B cell (primary cell): ENCODE measurements at regions of chr3 and their contacts with region 1.

Region 1: GRCh38 chr3:177197041-177197727 is at the start of gene TBL1XR1:
- DNase-seq: peak; percentile 93
- ATAC-seq: peak; percentile 60
- H3K4me3 ChIP-seq: peak within 1 kb of the TSS; percentile 94 to 99 (median 98)
- H3K4me3 Mint-ChIP-seq: peak within 1 kb of the TSS; percentile 99
- H3K27ac ChIP-seq: peak within 1 kb of the TSS; percentile 89 to 90
- H3K27ac Mint-ChIP-seq: peak within 1 kb of the TSS; percentile 97
- H3K4me1 ChIP-seq: peaks cover 46 to 53% of the 10 kb centered on the region in 2 donors
- H3K4me1 Mint-ChIP-seq: peaks cover 64% of the 10 kb centered on the region
- H3K27me3 ChIP-seq: no peaks in the 10 kb centered on the region
- H3K27me3 Mint-ChIP-seq: no peaks in the 10 kb centered on the region
- CTCF ChIP-seq: no peak
- total RNA-seq, gene TBL1XR1: 128 and 138 TPM in 2 replicates

Region 2: DNA sequence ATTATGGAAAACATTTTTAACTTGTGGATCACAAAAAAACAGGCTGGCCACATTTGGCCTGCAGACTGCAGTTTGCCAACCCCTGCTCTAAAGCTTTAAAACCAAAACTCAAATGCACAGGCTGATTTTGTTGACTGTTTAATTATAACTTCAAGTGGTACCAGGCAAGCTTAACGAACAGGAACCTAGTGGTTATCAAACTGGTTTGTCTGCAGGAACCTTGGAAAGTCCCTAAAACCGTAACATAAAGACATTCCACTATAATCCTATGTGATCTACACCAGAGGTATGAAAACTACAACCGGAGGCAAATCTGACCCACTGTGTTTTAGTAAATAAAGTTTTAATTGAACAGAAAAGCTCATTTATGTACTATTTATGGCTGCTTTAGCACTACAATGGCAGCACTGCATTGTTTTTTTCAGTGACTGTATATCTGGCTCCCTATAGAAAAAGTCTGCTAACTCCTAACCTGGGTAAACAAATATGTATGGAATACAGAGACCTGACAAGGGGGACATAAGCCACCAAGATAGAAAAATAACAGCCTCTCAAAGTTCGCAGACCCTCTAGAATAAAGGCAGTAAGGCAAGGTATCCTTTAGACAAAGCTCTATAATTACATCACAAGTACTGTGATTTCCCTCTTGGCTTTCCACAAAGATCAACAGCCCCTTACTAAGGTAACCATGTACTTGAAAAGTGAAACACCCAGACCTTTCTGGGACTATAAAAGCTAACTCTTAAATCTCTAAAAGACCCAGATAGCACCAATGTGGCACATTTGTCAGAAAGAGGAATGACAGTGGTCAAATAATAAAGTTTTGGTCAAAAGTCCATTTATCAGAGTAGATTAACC is 52.0 kb before region 1 on chr3:
- CTCF ChIA-PET with region 1: interaction called, 7 read pairs
- POLR2A ChIA-PET with region 1: interaction called, 5 read pairs
- intact Hi-C with region 1: loop called (anchors 1 kb)
- DNase-seq: peak; percentile 71
- ATAC-seq: peak; percentile 70
- H3K4me3 ChIP-seq: peak overlapping the region in 3 of 5 experiments; percentile 16 to 29 (median 18)
- H3K4me3 Mint-ChIP-seq: peak overlapping the region; percentile 68
- H3K27ac ChIP-seq: peak overlapping the region; percentile 75 to 85
- H3K27ac Mint-ChIP-seq: peak overlapping the region; percentile 86
- H3K4me1 ChIP-seq: peaks cover 70 to 72% of the 10 kb centered on the region in 2 donors
- H3K4me1 Mint-ChIP-seq: peaks cover 83% of the 10 kb centered on the region
- H3K27me3 ChIP-seq: no peaks in the 10 kb centered on the region
- H3K27me3 Mint-ChIP-seq: no peaks in the 10 kb centered on the region
- CTCF ChIP-seq: no peak

Region 3: GRCh38 chr3:177229791-177230190 is 32.6 kb after region 1 on chr3:
- CTCF ChIA-PET with region 1: no interaction called
- POLR2A ChIA-PET with region 1: no interaction called
- intact Hi-C with region 1: loop called (anchors 5 kb)
- DNase-seq: no peak
- ATAC-seq: no peak
- H3K4me3 ChIP-seq: no peak overlapping the region
- H3K4me3 Mint-ChIP-seq: no peak overlapping the region
- H3K27ac ChIP-seq: no peak overlapping the region
- H3K27ac Mint-ChIP-seq: no peak overlapping the region
- H3K4me1 ChIP-seq: peaks cover 8 to 12% of the 10 kb centered on the region in 2 donors
- H3K4me1 Mint-ChIP-seq: peaks cover 11% of the 10 kb centered on the region
- H3K27me3 ChIP-seq: no peaks in the 10 kb centered on the region
- H3K27me3 Mint-ChIP-seq: no peaks in the 10 kb centered on the region
- CTCF ChIP-seq: no peak

Region 4: GRCh38 chr3:177251755-177252154 is 54.6 kb after region 1 on chr3:
- CTCF ChIA-PET with region 1: interaction called, 3 read pairs
- POLR2A ChIA-PET with region 1: interaction called, 12 read pairs
- intact Hi-C with region 1: loop called (anchors 1 kb)
- DNase-seq: peak; percentile 52
- ATAC-seq: peak; percentile 58
- H3K4me3 ChIP-seq: no peak overlapping the region
- H3K4me3 Mint-ChIP-seq: no peak overlapping the region
- H3K27ac ChIP-seq: no peak overlapping the region
- H3K27ac Mint-ChIP-seq: no peak overlapping the region
- H3K4me1 ChIP-seq: peaks cover 11 to 19% of the 10 kb centered on the region in 2 donors
- H3K4me1 Mint-ChIP-seq: peaks cover 28% of the 10 kb centered on the region
- H3K27me3 ChIP-seq: no peaks in the 10 kb centered on the region
- H3K27me3 Mint-ChIP-seq: no peaks in the 10 kb centered on the region
- CTCF ChIP-seq: no peak

Region 5: DNA sequence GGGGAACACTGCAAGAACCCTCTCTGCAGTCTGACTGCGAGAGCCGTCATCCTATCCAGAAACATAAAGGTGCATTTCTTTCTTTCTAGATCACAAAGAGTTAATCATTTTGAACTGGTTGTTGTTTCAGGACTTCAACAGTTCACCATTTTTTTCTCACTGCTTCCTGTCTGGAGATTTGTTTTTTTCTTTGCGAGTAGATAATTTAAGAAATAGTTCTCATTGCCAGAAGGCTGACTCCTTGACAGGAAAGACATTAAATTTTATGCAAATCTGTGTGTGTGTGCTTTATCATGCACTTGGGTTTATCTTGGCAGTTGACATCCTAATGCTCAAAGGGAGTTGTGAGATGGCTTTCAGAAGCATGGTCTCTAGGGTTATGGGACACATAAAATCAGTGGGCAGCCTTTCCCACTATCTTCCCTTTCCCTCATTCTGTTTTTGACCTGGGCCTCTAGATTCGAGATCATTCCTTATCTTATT is 123.6 kb after region 1 on chr3:
- CTCF ChIA-PET with region 1: interaction called, 5 read pairs
- POLR2A ChIA-PET with region 1: interaction called, 4 read pairs
- intact Hi-C with region 1: loop called (anchors 1 kb)
- DNase-seq: peak; percentile 48
- ATAC-seq: peak; percentile 32
- H3K4me3 ChIP-seq: peak overlapping the region in 1 of 5 experiments; percentile 31
- H3K4me3 Mint-ChIP-seq: peak overlapping the region; percentile 72
- H3K27ac ChIP-seq: peak overlapping the region; percentile 5 to 61
- H3K27ac Mint-ChIP-seq: peak overlapping the region; percentile 83
- H3K4me1 ChIP-seq: peaks cover 78 to 81% of the 10 kb centered on the region in 2 donors
- H3K4me1 Mint-ChIP-seq: peaks cover 69% of the 10 kb centered on the region
- H3K27me3 ChIP-seq: no peaks in the 10 kb centered on the region
- H3K27me3 Mint-ChIP-seq: no peaks in the 10 kb centered on the region
- CTCF ChIP-seq: no peak

Region 6: GRCh38 chr3:177378168-177378567 is 181.0 kb after region 1 on chr3:
- CTCF ChIA-PET with region 1: no interaction called
- POLR2A ChIA-PET with region 1: no interaction called
- intact Hi-C with region 1: loop called (anchors 5 kb)
- DNase-seq: peak; percentile 70
- ATAC-seq: peak; percentile 43
- H3K4me3 ChIP-seq: no peak overlapping the region
- H3K4me3 Mint-ChIP-seq: peak overlapping the region; percentile 59
- H3K27ac ChIP-seq: no peak overlapping the region
- H3K27ac Mint-ChIP-seq: peak overlapping the region; percentile 47
- H3K4me1 ChIP-seq: peaks cover 22% of the 10 kb centered on the region in 2 donors
- H3K4me1 Mint-ChIP-seq: peaks cover 40% of the 10 kb centered on the region
- H3K27me3 ChIP-seq: no peaks in the 10 kb centered on the region
- H3K27me3 Mint-ChIP-seq: no peaks in the 10 kb centered on the region
- CTCF ChIP-seq: no peak

Region 7: DNA sequence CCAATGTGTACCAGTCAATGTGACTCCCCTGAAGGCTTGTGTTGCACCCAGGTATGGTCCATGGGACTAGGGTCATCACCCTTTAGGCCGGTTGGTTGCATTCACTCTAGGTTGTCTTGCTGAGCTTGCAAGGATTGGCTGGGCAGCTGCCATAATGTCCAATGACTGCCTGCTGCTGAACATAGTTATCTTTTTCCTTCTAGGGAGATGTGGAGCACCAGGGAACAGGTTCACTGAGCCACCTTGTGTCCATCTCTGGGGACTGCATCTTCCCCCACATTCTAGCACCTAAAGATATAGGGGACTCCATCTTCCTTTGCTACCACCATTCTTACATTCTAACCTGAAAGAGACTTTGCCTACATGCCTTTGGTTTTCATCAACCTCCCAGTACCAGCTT is 580.5 kb after region 1 on chr3:
- CTCF ChIA-PET with region 1: interaction called, 3 read pairs
- POLR2A ChIA-PET with region 1: interaction called, 7 read pairs
- intact Hi-C with region 1: loop called (anchors 2 kb)
- DNase-seq: peak; percentile 58
- ATAC-seq: peak; percentile 47
- H3K4me3 ChIP-seq: no peak overlapping the region
- H3K4me3 Mint-ChIP-seq: no peak overlapping the region
- H3K27ac ChIP-seq: no peak overlapping the region
- H3K27ac Mint-ChIP-seq: no peak overlapping the region
- H3K4me1 ChIP-seq: peaks cover 14 to 19% of the 10 kb centered on the region in 2 donors
- H3K4me1 Mint-ChIP-seq: peaks cover 18% of the 10 kb centered on the region
- H3K27me3 ChIP-seq: no peaks in the 10 kb centered on the region
- H3K27me3 Mint-ChIP-seq: no peaks in the 10 kb centered on the region
- CTCF ChIP-seq: peak; percentile 56